Mammary epithelial cell (primary cell): ENCODE measurements at regions of chr21 and their contacts with region 1.

Region 1: GRCh38 chr21:34936371-34936789 is 112.7 kb downstream of the RUNX1 start:
- DNase-seq: no peak
- H3K4me3 ChIP-seq: no peak overlapping the region
- H3K27ac ChIP-seq: peak overlapping the region; percentile 53
- H3K4me1 ChIP-seq: peaks cover 58% of the 10 kb centered on the region
- H3K27me3 ChIP-seq: no peaks in the 10 kb centered on the region
- CTCF ChIP-seq: no peak

Region 2: GRCh38 chr21:34807146-34807880 is 129.1 kb before region 1 on chr21:
- CTCF ChIA-PET with region 1: no interaction called
- dilution Hi-C with region 1: no loop called
- in situ Hi-C with region 1: no loop called
- intact Hi-C with region 1: no loop called
- DNase-seq: peak; percentile 97
- H3K4me3 ChIP-seq: no peak overlapping the region
- H3K27ac ChIP-seq: peak overlapping the region; percentile 100
- H3K4me1 ChIP-seq: peaks cover 78% of the 10 kb centered on the region
- H3K27me3 ChIP-seq: no peaks in the 10 kb centered on the region
- CTCF ChIP-seq: peak in 1 of 2 donors; percentile 21

Region 3: GRCh38 chr21:36060159-36060921 is 1124.0 kb after region 1 on chr21 and contains the start of gene SETD4:
- CTCF ChIA-PET with region 1: no interaction called
- dilution Hi-C with region 1: no loop called
- in situ Hi-C with region 1: no loop called
- intact Hi-C with region 1: loop called (anchors 5 kb)
- DNase-seq: peak; percentile 94
- H3K4me3 ChIP-seq: peak within 1 kb of the TSS; percentile 62 to 95 (median 85)
- H3K27ac ChIP-seq: peak within 1 kb of the TSS; percentile 74
- H3K4me1 ChIP-seq: peaks cover 11% of the 10 kb centered on the region
- H3K27me3 ChIP-seq: no peaks in the 10 kb centered on the region
- CTCF ChIP-seq: no peak
- total RNA-seq, gene SETD4: 21.3 to 29.5 TPM